Right cardiac atrium (tissue), 5 donors: ENCODE measurements at regions of chr21 and their contacts with region 1.

Region 1: DNA sequence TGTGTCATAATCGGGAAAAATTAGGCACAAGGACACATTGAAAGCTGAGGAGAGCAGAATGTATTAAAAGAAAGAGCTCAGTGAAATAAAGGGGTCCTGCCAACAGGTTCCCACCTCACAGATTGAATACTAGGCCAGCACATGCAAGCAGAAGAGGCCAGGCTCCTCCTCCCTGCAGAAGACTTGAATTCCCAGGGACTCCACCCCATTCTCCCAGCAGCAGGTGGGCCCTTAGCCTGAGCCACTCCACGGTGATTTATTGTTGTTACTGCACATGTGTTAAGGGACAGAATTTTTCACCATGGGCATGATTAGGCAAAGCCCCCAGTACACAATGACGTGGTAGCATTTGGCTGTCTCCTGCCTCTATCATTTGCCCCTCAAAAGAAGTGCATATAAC is 1844.7 kb downstream of the NCAM2 start:
- DNase-seq: no peak
- ATAC-seq: no peak
- H3K4me3 ChIP-seq: no peak overlapping the region
- H3K27ac ChIP-seq: no peak overlapping the region
- H3K4me1 ChIP-seq: no peaks in the 10 kb centered on the region
- H3K27me3 ChIP-seq: no peaks in the 10 kb centered on the region

Region 2: DNA sequence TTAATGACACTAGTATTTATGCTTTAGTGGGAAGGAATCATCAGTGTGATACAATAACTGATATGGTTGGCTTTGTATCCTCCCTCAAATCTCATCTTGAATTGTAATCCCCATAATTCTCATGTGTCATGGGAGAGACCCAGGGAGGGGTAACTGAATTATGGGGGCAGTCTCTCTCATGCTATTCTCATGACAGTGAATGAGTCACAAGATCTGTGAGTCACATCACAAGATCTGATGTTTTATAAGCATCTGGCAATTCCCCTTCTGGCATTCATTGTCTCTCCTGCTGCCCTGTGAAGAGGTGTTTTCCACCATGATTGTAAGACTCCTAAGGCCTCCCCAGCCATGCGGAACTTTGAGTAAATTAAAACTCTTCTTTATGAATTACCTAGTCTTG is 84.4 kb before region 1 on chr21:
- intact Hi-C with region 1: no loop called
- DNase-seq: no peak
- ATAC-seq: no peak
- H3K4me3 ChIP-seq: no peak overlapping the region
- H3K27ac ChIP-seq: no peak overlapping the region
- H3K4me1 ChIP-seq: no peaks in the 10 kb centered on the region
- H3K27me3 ChIP-seq: no peaks in the 10 kb centered on the region

Region 3: DNA sequence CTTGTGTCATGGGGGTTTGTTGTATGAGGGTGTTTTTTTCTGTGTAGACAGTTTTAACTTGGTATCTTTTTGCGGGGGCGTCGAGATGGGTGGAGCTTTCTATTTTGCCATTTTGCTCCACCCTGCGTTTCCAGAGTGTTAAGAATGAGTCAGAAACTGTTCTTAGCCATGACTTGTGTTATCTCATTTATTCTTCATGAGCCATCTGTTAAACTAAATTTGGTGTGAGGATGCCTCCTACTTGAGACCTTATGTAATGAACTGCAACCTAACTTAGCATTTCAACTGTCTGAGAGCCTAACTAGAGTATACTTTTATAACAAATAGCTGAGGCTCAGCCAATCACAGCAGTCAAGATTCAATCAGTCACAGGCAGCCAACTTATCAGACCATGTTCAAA is 28.8 kb after region 1 on chr21:
- intact Hi-C with region 1: loop called in 1 of 4 experiments (anchors 2 kb)
- DNase-seq: no peak
- ATAC-seq: no peak
- H3K4me3 ChIP-seq: no peak overlapping the region
- H3K27ac ChIP-seq: no peak overlapping the region
- H3K4me1 ChIP-seq: no peaks in the 10 kb centered on the region
- H3K27me3 ChIP-seq: no peaks in the 10 kb centered on the region